Esophagus muscularis mucosa (tissue), 4 donors: ENCODE measurements at regions of chr7 and their contacts with region 1.

Region 1: GRCh38 chr7:140810830-140811556 is 113.7 kb downstream of the BRAF start:
- DNase-seq: peak; percentile 92
- H3K4me3 ChIP-seq: no peak overlapping the region
- H3K27ac ChIP-seq: no peak overlapping the region
- H3K4me1 ChIP-seq: peaks cover 0 to 13% (median 9%) of the 10 kb centered on the region in 4 donors
- H3K27me3 ChIP-seq: no peaks in the 10 kb centered on the region
- CTCF ChIP-seq: peak; percentile 67 to 74 (median 72)
- EP300 ChIP-seq: no peak
- POLR2A ChIP-seq: no peak

Region 2: GRCh38 chr7:140924019-140924820 is 113.2 kb after region 1 on chr7:
- intact Hi-C with region 1: loop called (anchors 2 kb)
- DNase-seq: peak; percentile 94
- H3K4me3 ChIP-seq: peak overlapping the region; percentile 89 to 100 (median 99)
- H3K27ac ChIP-seq: peak overlapping the region; percentile 99 to 100 (median 100)
- H3K4me1 ChIP-seq: peaks cover 24 to 49% (median 41%) of the 10 kb centered on the region in 4 donors
- H3K27me3 ChIP-seq: no peaks in the 10 kb centered on the region
- CTCF ChIP-seq: peak; percentile 43 to 45 (median 44)
- EP300 ChIP-seq: no peak
- POLR2A ChIP-seq: no peak

Region 3: GRCh38 chr7:141533149-141533949 is 722.4 kb after region 1 on chr7:
- intact Hi-C with region 1: loop called (anchors 5 kb)
- DNase-seq: no peak
- H3K4me3 ChIP-seq: no peak overlapping the region
- H3K27ac ChIP-seq: no peak overlapping the region
- H3K4me1 ChIP-seq: peaks cover 0 to 9% (median 4%) of the 10 kb centered on the region in 4 donors
- H3K27me3 ChIP-seq: peaks cover 0 to 6% (median 0%) of the 10 kb centered on the region in 4 donors
- CTCF ChIP-seq: peak; percentile 78 to 96 (median 93)
- EP300 ChIP-seq: no peak
- POLR2A ChIP-seq: no peak